WTC11 (cell line): ENCODE measurements at regions of chr12 and their contacts with region 1.

Region 1: GRCh38 chr12:70383484-70383883 is 17.4 kb downstream of the KCNMB4 start:
- DNase-seq: no peak
- ATAC-seq: no peak
- H3K4me3 Mint-ChIP-seq: no peak overlapping the region
- H3K27ac Mint-ChIP-seq: peak overlapping the region; percentile 49
- H3K4me1 Mint-ChIP-seq: peaks cover 23% of the 10 kb centered on the region
- H3K27me3 Mint-ChIP-seq: no peaks in the 10 kb centered on the region
- CTCF ChIP-seq: no peak

Region 2: DNA sequence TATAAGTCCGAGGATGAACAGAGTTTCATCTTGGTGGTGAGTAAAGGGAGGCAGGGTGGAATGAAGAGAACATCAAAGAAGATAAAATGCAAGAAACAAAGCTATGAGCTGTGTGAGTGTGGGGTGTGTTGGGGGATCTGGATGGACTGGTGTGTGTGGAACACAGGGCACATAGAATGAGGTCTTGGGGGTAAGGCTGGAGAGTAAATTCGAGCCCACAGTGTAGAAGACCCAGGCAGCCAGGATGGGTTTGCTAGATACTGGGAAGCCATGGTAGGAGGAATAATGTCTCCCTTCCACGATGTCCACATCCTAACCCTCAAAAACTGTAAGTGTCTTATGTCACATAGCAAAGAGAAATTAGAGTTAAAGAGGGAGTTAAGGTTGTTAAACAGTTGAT is 10.6 kb before region 1 on chr12:
- CTCF ChIA-PET with region 1: no interaction called
- POLR2A ChIA-PET with region 1: interaction called, 13 read pairs
- DNase-seq: no peak
- ATAC-seq: no peak
- H3K4me3 Mint-ChIP-seq: no peak overlapping the region
- H3K27ac Mint-ChIP-seq: no peak overlapping the region
- H3K4me1 Mint-ChIP-seq: peaks cover 12% of the 10 kb centered on the region
- H3K27me3 Mint-ChIP-seq: no peaks in the 10 kb centered on the region
- CTCF ChIP-seq: no peak